H1 (cell line): ENCODE measurements at regions of chr3 and their contacts with region 1.

Region 1: DNA sequence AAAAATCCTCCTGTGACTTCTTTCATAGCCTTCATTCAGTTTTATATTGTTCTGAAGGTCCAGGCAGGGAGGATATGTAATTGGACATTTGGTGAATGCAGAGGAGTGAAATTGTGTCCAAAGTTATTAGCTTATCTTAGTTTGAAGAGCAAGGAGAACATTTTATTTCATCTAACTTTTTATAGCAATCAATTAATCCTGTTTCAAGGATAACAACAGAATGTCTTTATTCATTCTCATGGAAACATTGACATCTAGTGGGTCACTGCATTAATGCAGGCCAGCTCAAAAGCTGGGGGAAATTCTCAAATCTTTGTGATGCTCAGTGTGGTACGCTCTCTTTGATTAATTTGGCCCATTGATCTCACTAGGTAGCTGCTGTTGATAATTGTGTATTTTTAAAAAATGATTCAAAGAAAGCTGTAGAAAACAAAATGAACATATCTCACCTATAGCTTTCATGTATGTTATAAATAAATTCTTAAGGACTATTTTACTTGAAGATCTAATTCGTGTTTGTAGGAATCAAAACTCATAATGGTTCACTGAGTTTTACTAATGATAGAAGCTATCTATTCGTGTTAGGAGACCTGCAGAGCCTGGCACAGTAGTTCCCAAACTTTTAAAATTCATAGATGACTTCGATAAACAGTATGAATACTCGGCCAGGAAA is 150.8 kb upstream of the KCNMB2 start:
- DNase-seq: peak; percentile 1 to 50
- H3K4me3 ChIP-seq: no peak overlapping the region
- H3K27ac ChIP-seq: no peak overlapping the region
- H3K4me1 ChIP-seq: no peaks in the 10 kb centered on the region
- H3K27me3 ChIP-seq: no peaks in the 10 kb centered on the region
- CTCF ChIP-seq: peak in 2 of 3 experiments; percentile 47 to 76; a peak in 3 of 4 replicates
- EP300 ChIP-seq: no peak
- POLR2A ChIP-seq: no peak
- RAD21 ChIP-seq: peak; percentile 87 to 92

Region 2: GRCh38 chr3:177802151-177802900 is 583.1 kb before region 1 on chr3:
- CTCF ChIA-PET with region 1: no interaction called
- POLR2A ChIA-PET with region 1: no interaction called
- DNase-seq: no peak
- H3K4me3 ChIP-seq: no peak overlapping the region
- H3K27ac ChIP-seq: no peak overlapping the region
- H3K4me1 ChIP-seq: no peaks in the 10 kb centered on the region
- H3K27me3 ChIP-seq: no peaks in the 10 kb centered on the region
- CTCF ChIP-seq: no peak
- EP300 ChIP-seq: no peak
- POLR2A ChIP-seq: no peak
- RAD21 ChIP-seq: peak; percentile 18 to 36; a peak in 2 of 4 replicates

Region 3: DNA sequence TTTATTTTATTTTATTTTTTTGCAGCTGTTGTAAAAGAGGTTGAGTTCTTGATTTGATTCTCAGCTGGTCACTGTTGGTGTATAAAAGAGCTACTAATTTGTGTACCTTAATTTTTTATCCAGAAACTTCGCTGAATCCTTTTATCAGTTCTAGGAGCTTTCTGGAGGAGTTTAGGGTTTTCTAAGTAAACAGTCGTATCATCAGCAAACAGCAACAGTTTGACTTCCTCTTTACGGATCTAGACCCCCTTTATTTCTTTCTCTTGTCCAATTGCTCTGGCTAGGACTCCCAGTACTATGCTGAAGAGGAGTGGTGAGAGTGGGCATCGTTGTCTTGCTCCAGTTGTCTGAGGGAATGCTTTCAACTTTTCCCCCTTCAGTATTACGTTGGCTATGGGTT is 15.0 kb before region 1 on chr3:
- CTCF ChIA-PET with region 1: interaction called, 11 read pairs
- POLR2A ChIA-PET with region 1: no interaction called
- DNase-seq: no peak
- H3K4me3 ChIP-seq: no peak overlapping the region
- H3K27ac ChIP-seq: no peak overlapping the region
- H3K4me1 ChIP-seq: no peaks in the 10 kb centered on the region
- H3K27me3 ChIP-seq: no peaks in the 10 kb centered on the region
- CTCF ChIP-seq: no peak
- EP300 ChIP-seq: no peak
- POLR2A ChIP-seq: no peak
- RAD21 ChIP-seq: no peak